ENCODE measurements at regions of chr22 and their contacts with region 1.

Region 1: GRCh38 chr22:25067851-25068421 is 115.4 kb downstream of the KIAA1671 start:
- DNase-seq: peak; percentile 68 to 94 (median 86)
- ATAC-seq: peak; percentile 89 to 96
- H3K4me3 Mint-ChIP-seq: peak overlapping the region; percentile 75 to 95 (median 82)
- H3K27ac Mint-ChIP-seq: peak overlapping the region; percentile 93 to 99 (median 98)
- H3K4me1 Mint-ChIP-seq: peaks cover 39 to 99% (median 94%) of the 10 kb centered on the region in 4 donors
- H3K27me3 Mint-ChIP-seq: peaks cover 0 to 2% (median 0%) of the 10 kb centered on the region in 5 donors

Region 2: DNA sequence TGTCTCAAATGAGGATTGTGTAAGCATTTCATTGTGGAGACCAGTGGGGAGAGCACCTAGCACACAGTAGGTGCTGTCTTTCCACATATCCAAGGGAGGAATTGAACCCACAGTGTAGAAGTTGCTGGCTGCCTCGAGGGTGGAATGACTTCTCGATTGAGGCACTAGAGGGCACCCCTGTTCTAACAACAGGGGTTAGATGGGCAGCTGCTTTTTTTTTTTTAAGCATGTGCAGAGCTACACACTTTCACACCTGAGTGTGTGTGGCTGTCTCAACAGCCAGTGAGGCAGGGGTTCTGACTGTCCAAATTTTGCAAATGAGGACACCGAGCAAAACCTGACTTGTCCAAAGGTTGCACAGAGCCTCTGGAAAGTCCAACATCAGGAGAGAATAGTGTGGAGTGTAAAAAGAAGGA is 13.5 kb after region 1 on chr22:
- POLR2A ChIA-PET with region 1: interaction called, 32 read pairs
- DNase-seq: peak in 7 of 10 donors; percentile 34 to 78 (median 50)
- ATAC-seq: peak; percentile 65 to 85
- H3K4me3 Mint-ChIP-seq: no peak overlapping the region
- H3K27ac Mint-ChIP-seq: peak overlapping the region in 3 of 10 donors; percentile 50 to 85 (median 56)
- H3K4me1 Mint-ChIP-seq: peaks cover 20 to 52% (median 48%) of the 10 kb centered on the region in 4 donors
- H3K27me3 Mint-ChIP-seq: no peaks in the 10 kb centered on the region

Region 3: GRCh38 chr22:25110846-25111578 is 43.1 kb after region 1 on chr22:
- POLR2A ChIA-PET with region 1: interaction called, 20 read pairs
- DNase-seq: peak; percentile 30 to 77 (median 58)
- ATAC-seq: peak; percentile 85 to 87
- H3K4me3 Mint-ChIP-seq: peak overlapping the region; percentile 82 to 97 (median 90)
- H3K27ac Mint-ChIP-seq: peak overlapping the region; percentile 85 to 97 (median 90)
- H3K4me1 Mint-ChIP-seq: peaks cover 14 to 42% (median 26%) of the 10 kb centered on the region in 4 donors
- H3K27me3 Mint-ChIP-seq: peaks cover 0 to 5% (median 0%) of the 10 kb centered on the region in 5 donors

Region 4: DNA sequence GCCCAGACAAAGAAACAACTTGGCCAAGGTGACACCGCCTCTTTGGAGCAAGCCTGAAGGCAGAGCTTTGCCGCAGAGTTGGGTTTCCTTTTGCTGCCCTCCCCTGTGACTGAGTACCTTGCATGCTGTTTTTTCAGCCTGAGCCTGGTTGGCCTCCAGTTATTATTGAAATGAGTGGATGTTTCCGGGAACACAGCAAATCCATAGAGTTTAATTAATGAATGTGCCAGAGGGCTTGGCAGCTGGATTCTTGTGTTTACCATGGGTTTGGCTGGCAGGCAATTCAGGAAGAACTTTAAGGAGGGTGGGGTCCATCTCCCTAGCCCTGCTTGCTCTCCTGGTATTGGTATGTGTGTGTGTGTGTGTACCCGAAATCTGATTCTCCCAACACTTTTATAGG is 66.1 kb after region 1 on chr22:
- POLR2A ChIA-PET with region 1: no interaction called
- DNase-seq: no peak
- ATAC-seq: no peak
- H3K4me3 Mint-ChIP-seq: no peak overlapping the region
- H3K27ac Mint-ChIP-seq: peak overlapping the region in 1 of 10 donors; percentile 7
- H3K4me1 Mint-ChIP-seq: peaks cover 0 to 2% (median under 1%) of the 10 kb centered on the region in 4 donors
- H3K27me3 Mint-ChIP-seq: no peaks in the 10 kb centered on the region

Measured in naive thymus-derived CD8-positive, alpha-beta T cell (primary cell).